ENCODE measurements at regions of chr3 and their contacts with region 1.

Region 1: GRCh38 chr3:71978150-71978721 is 193.3 kb upstream of the PROK2 start:
- DNase-seq: peak; percentile 14
- H3K4me3 Mint-ChIP-seq: peak overlapping the region; percentile 53
- H3K27ac Mint-ChIP-seq: peak overlapping the region; percentile 13
- H3K4me1 Mint-ChIP-seq: peaks cover 47% of the 10 kb centered on the region
- H3K27me3 Mint-ChIP-seq: no peaks in the 10 kb centered on the region

Region 2: GRCh38 chr3:71875461-71875947 is 102.7 kb before region 1 on chr3:
- intact Hi-C with region 1: loop called (anchors 2 kb)
- DNase-seq: peak; percentile 67
- H3K4me3 Mint-ChIP-seq: no peak overlapping the region
- H3K27ac Mint-ChIP-seq: peak overlapping the region; percentile 59
- H3K4me1 Mint-ChIP-seq: peaks cover 38% of the 10 kb centered on the region
- H3K27me3 Mint-ChIP-seq: peaks cover 8% of the 10 kb centered on the region

Region 3: GRCh38 chr3:71930056-71930991 is 47.9 kb before region 1 on chr3:
- intact Hi-C with region 1: no loop called
- DNase-seq: no peak
- H3K4me3 Mint-ChIP-seq: no peak overlapping the region
- H3K27ac Mint-ChIP-seq: no peak overlapping the region
- H3K4me1 Mint-ChIP-seq: peaks cover 12% of the 10 kb centered on the region
- H3K27me3 Mint-ChIP-seq: no peaks in the 10 kb centered on the region

Region 4: DNA sequence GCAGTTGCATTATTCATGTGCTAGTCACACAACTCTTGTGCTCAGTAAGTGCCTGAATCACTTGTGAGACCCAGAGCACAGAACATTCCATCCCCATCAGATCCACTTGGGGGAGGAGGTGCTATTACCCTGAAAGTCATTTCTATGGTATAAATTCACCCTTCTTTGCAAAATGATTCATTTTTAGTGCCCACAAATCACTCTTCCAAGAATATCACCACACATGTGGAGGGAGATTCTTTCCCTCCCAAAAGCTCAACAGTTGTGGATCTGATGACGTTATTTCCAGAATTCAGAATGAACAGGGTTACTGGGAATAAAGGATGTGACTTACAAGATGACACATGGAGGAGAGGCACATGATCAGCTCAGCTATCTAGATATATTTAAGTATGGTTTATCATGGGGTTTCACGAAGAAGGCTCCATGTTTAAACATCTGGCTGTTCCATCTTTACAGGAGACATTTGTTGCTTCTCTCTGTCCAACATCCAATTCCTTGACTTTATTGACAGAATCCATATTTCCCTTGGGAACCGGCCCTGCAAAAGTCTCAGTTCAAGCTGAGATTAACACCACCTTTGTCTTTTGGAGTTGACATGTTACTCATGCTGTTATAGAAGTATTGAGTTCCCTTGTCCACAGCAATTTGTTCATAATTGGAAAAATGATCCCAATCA is 20.9 kb after region 1 on chr3:
- intact Hi-C with region 1: loop called (anchors 1 kb)
- DNase-seq: no peak
- H3K4me3 Mint-ChIP-seq: no peak overlapping the region
- H3K27ac Mint-ChIP-seq: peak overlapping the region; percentile 63
- H3K4me1 Mint-ChIP-seq: peaks cover 44% of the 10 kb centered on the region
- H3K27me3 Mint-ChIP-seq: no peaks in the 10 kb centered on the region

Region 5: DNA sequence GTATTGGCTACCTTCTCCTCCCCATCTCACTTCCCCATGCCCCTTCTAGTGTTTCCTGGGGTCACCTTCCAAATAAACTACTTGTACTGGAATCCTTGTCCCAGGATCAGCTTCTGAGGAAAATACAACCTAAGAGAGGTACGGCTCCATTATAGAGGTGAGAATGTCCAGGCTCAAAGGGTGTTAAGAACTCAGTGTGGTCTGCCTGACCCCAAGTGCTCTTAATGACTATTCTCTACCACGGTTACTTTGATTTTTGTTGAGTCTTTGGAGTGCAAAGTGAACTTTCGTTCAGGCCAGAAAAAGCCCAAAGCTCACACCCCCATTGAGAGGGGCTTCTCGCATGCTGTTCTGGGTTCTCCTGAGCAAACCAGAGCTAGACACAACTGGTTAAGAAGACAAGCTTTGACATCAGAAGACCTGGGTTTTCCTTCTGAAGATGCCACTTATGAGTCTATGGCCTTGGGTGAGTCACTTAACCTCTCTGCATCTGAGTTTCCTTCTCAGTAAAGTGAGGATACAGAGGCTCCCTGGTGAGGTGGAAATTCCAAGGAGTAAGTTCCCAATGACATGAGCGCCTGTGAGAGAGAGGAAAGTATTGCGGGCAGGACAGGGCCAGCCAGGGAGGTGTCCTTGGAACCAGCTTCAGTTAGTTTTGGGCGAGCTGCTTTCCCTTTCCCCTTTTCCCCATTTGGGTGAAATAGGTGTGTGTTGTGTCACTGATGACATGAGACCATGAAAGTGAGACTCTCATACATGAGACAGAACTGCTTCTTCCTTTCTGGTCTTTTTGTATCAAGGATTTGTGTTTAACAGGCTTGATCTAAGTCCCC is 281.7 kb after region 1 on chr3:
- intact Hi-C with region 1: loop called (anchors 1 kb)
- DNase-seq: no peak
- H3K4me3 Mint-ChIP-seq: no peak overlapping the region
- H3K27ac Mint-ChIP-seq: peak overlapping the region; percentile 81
- H3K4me1 Mint-ChIP-seq: peaks cover 24% of the 10 kb centered on the region
- H3K27me3 Mint-ChIP-seq: peaks cover 3% of the 10 kb centered on the region

Region 6: DNA sequence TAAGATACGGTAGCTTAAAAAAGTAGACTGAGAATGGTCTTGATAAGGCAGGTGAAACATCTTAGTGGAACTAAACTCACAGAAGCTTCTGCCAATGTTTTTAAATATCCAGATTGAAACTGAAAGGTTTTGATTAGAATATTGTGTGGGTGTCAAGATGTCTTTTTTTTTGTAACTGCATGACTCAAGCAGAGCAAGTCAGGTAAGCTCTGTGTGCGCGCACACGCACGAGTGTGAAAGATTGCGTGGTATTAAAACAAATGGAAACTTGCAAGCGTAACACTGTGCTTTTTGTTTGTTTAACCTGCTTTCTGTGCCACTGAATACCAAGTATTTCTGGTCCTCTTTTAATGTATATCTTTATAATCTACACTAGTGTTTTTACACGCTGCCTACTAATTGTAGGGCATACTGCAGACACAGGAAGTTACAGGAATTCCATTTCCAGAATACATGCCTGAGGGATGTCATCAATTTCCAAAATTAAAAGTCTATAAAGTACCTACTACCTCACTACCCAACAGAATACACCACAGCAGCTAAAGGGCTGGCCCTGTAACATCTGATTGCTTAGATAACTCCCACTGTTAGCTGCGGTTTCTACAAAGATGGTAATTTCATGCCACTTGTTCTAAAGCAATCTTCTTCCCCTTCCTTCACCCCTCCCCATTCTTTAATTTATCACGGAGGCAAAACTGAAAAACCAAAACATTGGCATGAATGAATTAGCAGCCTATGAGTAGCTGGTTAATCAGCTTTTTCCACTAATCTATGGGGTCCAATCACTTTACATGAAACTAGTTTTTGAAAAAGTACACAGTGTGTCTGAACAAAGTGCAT is 397.2 kb after region 1 on chr3:
- intact Hi-C with region 1: loop called (anchors 2 kb)
- DNase-seq: no peak
- H3K4me3 Mint-ChIP-seq: peak overlapping the region; percentile 32
- H3K27ac Mint-ChIP-seq: peak overlapping the region; percentile 92
- H3K4me1 Mint-ChIP-seq: peaks cover 48% of the 10 kb centered on the region
- H3K27me3 Mint-ChIP-seq: no peaks in the 10 kb centered on the region

Region 7: DNA sequence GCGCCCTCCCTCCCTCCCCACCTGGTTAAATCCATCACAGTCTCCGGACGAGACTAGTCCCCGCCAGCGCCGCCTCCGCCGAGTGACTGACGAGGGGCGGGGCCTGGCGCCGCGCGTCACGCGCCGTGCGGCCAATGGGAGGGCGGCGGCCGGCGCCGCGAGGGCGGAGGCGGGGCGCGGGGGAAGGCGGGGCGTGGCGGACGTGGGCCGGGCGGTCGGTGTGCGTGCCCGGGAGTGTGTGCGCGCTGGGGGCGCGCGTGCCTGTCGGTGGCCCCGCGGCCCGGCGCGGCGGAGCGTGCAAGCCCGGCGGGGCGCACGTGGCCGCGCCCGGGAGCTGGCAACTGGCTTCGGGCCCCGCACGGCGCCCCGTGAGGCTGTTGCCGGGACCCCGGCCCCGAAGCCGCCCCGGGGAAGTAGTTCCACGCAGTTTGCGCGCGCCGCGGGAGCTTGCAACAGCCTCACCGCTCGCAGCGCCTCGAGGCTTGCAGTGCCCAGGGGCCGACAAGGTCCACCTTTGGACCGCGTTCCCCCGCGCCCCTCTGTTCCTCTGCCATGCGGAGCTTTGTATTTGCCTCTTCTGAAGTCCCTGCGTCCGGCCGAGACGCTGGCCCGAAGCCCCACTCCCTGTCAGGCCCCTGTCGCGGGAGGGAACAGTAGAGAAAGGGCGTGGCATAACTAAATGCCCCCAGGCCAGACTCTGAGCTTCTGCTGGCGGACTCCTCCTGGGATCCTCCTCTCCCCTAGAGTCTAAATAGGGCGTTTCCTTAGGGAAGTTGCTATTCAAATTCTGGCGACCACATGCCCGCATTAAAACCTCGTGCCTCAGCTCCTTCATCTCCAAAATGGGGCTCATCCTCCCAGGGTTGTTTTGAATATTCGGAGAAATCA is 469.1 kb after region 1 on chr3:
- intact Hi-C with region 1: loop called (anchors 1 kb)
- DNase-seq: peak; percentile 93
- H3K4me3 Mint-ChIP-seq: peak overlapping the region; percentile 71
- H3K27ac Mint-ChIP-seq: peak overlapping the region; percentile 80
- H3K4me1 Mint-ChIP-seq: peaks cover 50% of the 10 kb centered on the region
- H3K27me3 Mint-ChIP-seq: peaks cover 1% of the 10 kb centered on the region

Region 8: DNA sequence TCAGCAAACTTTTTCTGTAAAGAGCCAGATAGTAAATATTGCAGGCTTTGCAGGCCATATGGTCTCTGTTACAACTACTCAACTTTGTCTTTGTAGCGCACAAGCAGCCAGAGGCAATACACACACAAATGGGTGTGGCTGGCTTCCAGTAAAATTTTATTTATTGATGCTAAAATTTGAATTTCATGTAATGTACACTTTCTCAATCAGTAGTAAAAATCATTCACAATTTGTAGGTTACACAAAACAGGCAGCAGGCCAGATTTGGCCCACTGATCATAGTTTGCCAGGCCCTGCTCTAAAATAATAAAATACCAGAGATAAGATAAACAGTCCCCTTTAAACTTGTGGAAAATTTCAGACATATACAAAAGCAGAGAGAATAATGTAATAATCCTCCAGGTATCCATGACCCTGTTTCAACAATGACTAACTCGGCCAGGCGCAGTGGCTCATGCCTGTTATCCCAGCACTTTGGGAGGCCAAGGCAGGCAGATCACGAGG is 539.7 kb after region 1 on chr3:
- intact Hi-C with region 1: no loop called
- DNase-seq: no peak
- H3K4me3 Mint-ChIP-seq: no peak overlapping the region
- H3K27ac Mint-ChIP-seq: peak overlapping the region; percentile 38
- H3K4me1 Mint-ChIP-seq: peaks cover 45% of the 10 kb centered on the region
- H3K27me3 Mint-ChIP-seq: no peaks in the 10 kb centered on the region

Region 9: DNA sequence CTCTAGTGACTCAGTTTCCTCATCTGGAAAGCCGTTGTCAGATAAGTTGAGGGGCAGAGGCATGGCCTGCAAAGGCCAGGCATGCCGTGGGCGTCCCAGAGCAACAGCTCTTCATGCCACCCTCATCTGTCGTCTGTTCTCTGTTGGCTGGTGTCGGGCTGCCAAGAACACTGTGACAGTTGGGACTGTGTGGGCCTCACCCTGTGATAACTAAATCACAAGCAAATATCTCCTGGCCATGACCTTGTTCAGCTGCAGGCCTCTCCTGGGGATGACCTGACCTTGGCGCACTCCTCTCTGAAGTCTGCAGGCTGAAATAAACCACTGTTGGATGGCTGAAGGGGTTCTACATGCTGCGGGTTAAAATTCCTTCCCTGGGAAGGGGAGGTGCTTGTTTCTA is 724.2 kb after region 1 on chr3:
- intact Hi-C with region 1: no loop called
- DNase-seq: no peak
- H3K4me3 Mint-ChIP-seq: no peak overlapping the region
- H3K27ac Mint-ChIP-seq: no peak overlapping the region
- H3K4me1 Mint-ChIP-seq: no peaks in the 10 kb centered on the region
- H3K27me3 Mint-ChIP-seq: no peaks in the 10 kb centered on the region

Measured in activated T-helper 1 cell treated with anti-CD3 and anti-CD28 coated beads, Interleukin-12 subunit alpha, Interleukin-12 subunit beta, Interleukin-2, Interleukin-4 antibody, amounts not matched to agents 30 ng/mL and 10 ng/mL and 1 ng/mL, durations not matched to agents 14 hours and 24 hours and 36 hours (primary cell).